GM12878 (cell line): ENCODE measurements at regions of chr1 and their contacts with region 1.

Region 1: DNA sequence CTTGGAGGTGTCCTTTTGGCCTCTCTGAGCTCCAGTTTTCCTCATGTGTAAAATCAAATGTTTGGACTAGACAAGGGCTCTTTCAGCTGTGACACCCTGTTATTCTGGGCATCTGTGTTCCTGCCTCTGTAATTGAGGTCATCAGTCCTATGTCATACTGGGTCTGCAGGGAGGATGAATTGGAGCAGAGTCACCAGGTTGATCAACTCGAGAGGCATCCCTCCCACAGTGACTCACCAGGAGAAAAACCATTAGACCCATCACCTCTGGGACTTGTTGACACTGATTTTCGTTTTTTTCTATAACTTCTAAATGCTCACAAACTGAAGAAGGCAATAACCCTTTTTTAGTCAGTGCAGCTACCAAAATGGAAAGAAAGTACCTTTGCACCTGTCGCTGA is 82.2 kb downstream of the ST6GALNAC5 start:
- DNase-seq: no peak
- ATAC-seq: peak; percentile 38
- H3K4me3 ChIP-seq: no peak overlapping the region
- H3K27ac ChIP-seq: no peak overlapping the region
- H3K4me1 ChIP-seq: no peaks in the 10 kb centered on the region
- H3K27me3 ChIP-seq: 0 out of 4 replicates have a peak, but pooled peaks cover 0 to 1% of the 10 kb centered on the region in 2 experiments
- CTCF ChIP-seq: no peak
- EP300 ChIP-seq: no peak
- POLR2A ChIP-seq: no peak
- RAD21 ChIP-seq: no peak

Region 2: DNA sequence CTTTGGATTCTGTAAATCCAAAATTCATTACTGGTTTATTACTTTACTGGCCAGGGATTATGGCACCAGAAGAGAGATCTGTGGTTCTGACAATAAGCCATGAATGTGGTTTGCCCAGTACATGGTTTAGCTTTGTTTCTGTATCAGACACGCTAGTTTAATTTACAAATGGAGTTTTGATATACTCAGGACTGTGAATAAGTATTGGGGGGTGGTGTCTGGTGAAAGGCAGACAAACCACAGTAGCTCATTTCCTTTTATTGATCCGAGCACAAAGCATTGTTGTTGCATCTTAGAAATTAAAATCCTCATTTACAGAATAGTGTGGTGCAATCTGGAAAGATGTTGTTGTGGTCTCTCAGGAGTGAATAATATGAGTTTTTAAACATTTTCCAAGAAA is 779.0 kb before region 1 on chr1:
- CTCF ChIA-PET with region 1: no interaction called
- POLR2A ChIA-PET with region 1: no interaction called
- RAD21 ChIA-PET with region 1: no interaction called
- SMC1A ChIA-PET with region 1: no interaction called
- in situ Hi-C with region 1: no loop called
- intact Hi-C with region 1: no loop called
- DNase-seq: no peak
- ATAC-seq: no peak
- H3K4me3 ChIP-seq: no peak overlapping the region
- H3K27ac ChIP-seq: no peak overlapping the region
- H3K4me1 ChIP-seq: no peaks in the 10 kb centered on the region
- H3K27me3 ChIP-seq: no peaks in the 10 kb centered on the region
- CTCF ChIP-seq: no peak
- EP300 ChIP-seq: no peak
- POLR2A ChIP-seq: no peak
- RAD21 ChIP-seq: no peak

Region 3: GRCh38 chr1:76901158-76901767 is 48.2 kb before region 1 on chr1:
- CTCF ChIA-PET with region 1: interaction called, 3 read pairs
- POLR2A ChIA-PET with region 1: no interaction called
- RAD21 ChIA-PET with region 1: interaction called, 3 read pairs
- SMC1A ChIA-PET with region 1: interaction called, 14 read pairs
- in situ Hi-C with region 1: no loop called
- intact Hi-C with region 1: no loop called
- DNase-seq: peak; percentile 9
- ATAC-seq: peak; percentile 99
- H3K4me3 ChIP-seq: no peak overlapping the region
- H3K27ac ChIP-seq: no peak overlapping the region
- H3K4me1 ChIP-seq: no peaks in the 10 kb centered on the region
- H3K27me3 ChIP-seq: no peaks in the 10 kb centered on the region
- CTCF ChIP-seq: peak; percentile 72 to 80 (median 78)
- EP300 ChIP-seq: no peak
- POLR2A ChIP-seq: no peak
- RAD21 ChIP-seq: peak; percentile 71

Region 4: GRCh38 chr1:76919085-76919484 is 30.4 kb before region 1 on chr1:
- CTCF ChIA-PET with region 1: interaction called, 4 read pairs
- POLR2A ChIA-PET with region 1: interaction called, 5 read pairs
- RAD21 ChIA-PET with region 1: interaction called, 8 read pairs
- SMC1A ChIA-PET with region 1: interaction called, 15 read pairs
- in situ Hi-C with region 1: no loop called
- intact Hi-C with region 1: no loop called
- DNase-seq: no peak
- ATAC-seq: peak; percentile 10; the same call in 1 of the 3 replicates
- H3K4me3 ChIP-seq: no peak overlapping the region
- H3K27ac ChIP-seq: no peak overlapping the region
- H3K4me1 ChIP-seq: no peaks in the 10 kb centered on the region
- H3K27me3 ChIP-seq: no peaks in the 10 kb centered on the region
- CTCF ChIP-seq: no peak
- EP300 ChIP-seq: no peak
- POLR2A ChIP-seq: no peak
- RAD21 ChIP-seq: no peak

Region 5: GRCh38 chr1:76961181-76961819 is 11.8 kb after region 1 on chr1:
- CTCF ChIA-PET with region 1: interaction called, 17 read pairs
- POLR2A ChIA-PET with region 1: interaction called, 8 read pairs
- RAD21 ChIA-PET with region 1: interaction called, 4 read pairs
- SMC1A ChIA-PET with region 1: interaction called, 31 read pairs
- in situ Hi-C with region 1: no loop called
- intact Hi-C with region 1: no loop called
- DNase-seq: no peak
- ATAC-seq: no peak
- H3K4me3 ChIP-seq: no peak overlapping the region
- H3K27ac ChIP-seq: no peak overlapping the region
- H3K4me1 ChIP-seq: no peaks in the 10 kb centered on the region
- H3K27me3 ChIP-seq: no peaks in the 10 kb centered on the region
- CTCF ChIP-seq: no peak
- EP300 ChIP-seq: no peak
- POLR2A ChIP-seq: no peak
- RAD21 ChIP-seq: no peak

Region 6: GRCh38 chr1:77010937-77011336 is 61.4 kb after region 1 on chr1:
- CTCF ChIA-PET with region 1: interaction called, 3 read pairs
- POLR2A ChIA-PET with region 1: no interaction called
- RAD21 ChIA-PET with region 1: interaction called, 21 read pairs
- SMC1A ChIA-PET with region 1: interaction called, 24 read pairs
- in situ Hi-C with region 1: no loop called
- intact Hi-C with region 1: no loop called
- DNase-seq: no peak
- ATAC-seq: no peak
- H3K4me3 ChIP-seq: no peak overlapping the region
- H3K27ac ChIP-seq: no peak overlapping the region
- H3K4me1 ChIP-seq: no peaks in the 10 kb centered on the region
- H3K27me3 ChIP-seq: no peaks in the 10 kb centered on the region
- CTCF ChIP-seq: no peak
- EP300 ChIP-seq: no peak
- POLR2A ChIP-seq: no peak
- RAD21 ChIP-seq: no peak

Region 7: GRCh38 chr1:77120950-77121349 is 171.4 kb after region 1 on chr1:
- CTCF ChIA-PET with region 1: interaction called, 5 read pairs
- POLR2A ChIA-PET with region 1: no interaction called
- RAD21 ChIA-PET with region 1: interaction called, 11 read pairs
- SMC1A ChIA-PET with region 1: interaction called, 5 read pairs
- in situ Hi-C with region 1: no loop called
- intact Hi-C with region 1: no loop called
- DNase-seq: no peak
- ATAC-seq: no peak
- H3K4me3 ChIP-seq: no peak overlapping the region
- H3K27ac ChIP-seq: no peak overlapping the region
- H3K4me1 ChIP-seq: no peaks in the 10 kb centered on the region
- H3K27me3 ChIP-seq: no peaks in the 10 kb centered on the region
- CTCF ChIP-seq: no peak
- EP300 ChIP-seq: no peak
- POLR2A ChIP-seq: no peak
- RAD21 ChIP-seq: no peak